Activated T-helper 2 cell treated with anti-CD3 and anti-CD28 coated beads, Interferon-gamma antibody, Interleukin-2, Interleukin-4, amounts not matched to agents 10 μg/mL and 5 μg/mL and 100 μg/mL, durations not matched to agents 14 hours and 24 hours and 36 hours (primary cell): ENCODE measurements at regions of chr17 and their contacts with region 1.

Region 1: DNA sequence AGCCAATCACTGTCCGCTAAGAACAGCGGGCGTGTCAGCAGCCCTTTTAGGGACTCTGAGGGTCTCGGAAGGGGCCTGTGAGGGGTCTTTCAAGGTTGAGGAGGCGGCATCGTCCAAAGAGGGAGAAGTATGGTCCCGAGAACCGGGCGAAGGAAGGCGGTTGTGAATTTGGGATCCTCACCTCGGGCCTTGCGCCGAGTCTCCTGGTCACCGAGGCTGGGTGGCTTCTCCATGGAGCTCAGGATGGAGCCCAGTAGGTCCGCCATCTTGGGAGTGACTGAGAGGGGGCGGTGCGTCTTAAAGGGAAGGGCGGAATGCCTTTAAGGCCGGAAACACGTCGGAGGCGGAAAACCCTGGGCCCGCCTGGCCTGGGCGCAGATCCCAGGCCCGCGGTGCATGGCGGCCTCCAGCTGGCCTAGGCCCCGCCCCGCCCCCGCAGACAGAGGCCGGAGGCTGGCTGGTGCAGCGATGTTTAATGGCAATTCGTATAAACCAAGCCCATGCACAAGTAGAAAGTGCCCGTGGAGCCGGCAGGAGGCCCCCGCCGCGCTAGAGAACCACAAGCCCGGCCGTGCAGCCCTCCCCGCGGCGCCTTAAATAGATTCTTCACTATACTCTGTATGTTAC is at the start of gene SPAG7:
- DNase-seq: peak; percentile 94
- H3K4me3 Mint-ChIP-seq: no peak within 1 kb of the TSS
- H3K27ac Mint-ChIP-seq: peak within 1 kb of the TSS; percentile 72
- H3K4me1 Mint-ChIP-seq: peaks cover 35% of the 10 kb centered on the region
- H3K27me3 Mint-ChIP-seq: no peaks in the 10 kb centered on the region
- total RNA-seq, gene SPAG7: 66.5 and 70.4 TPM in 2 replicates

Region 2: GRCh38 chr17:4908301-4908700 is 59.4 kb before region 1 on chr17:
- intact Hi-C with region 1: loop called (anchors 2 kb)
- DNase-seq: no peak
- H3K4me3 Mint-ChIP-seq: no peak overlapping the region
- H3K27ac Mint-ChIP-seq: no peak overlapping the region
- H3K4me1 Mint-ChIP-seq: peaks cover 4% of the 10 kb centered on the region
- H3K27me3 Mint-ChIP-seq: peaks cover 3% of the 10 kb centered on the region

Region 3: DNA sequence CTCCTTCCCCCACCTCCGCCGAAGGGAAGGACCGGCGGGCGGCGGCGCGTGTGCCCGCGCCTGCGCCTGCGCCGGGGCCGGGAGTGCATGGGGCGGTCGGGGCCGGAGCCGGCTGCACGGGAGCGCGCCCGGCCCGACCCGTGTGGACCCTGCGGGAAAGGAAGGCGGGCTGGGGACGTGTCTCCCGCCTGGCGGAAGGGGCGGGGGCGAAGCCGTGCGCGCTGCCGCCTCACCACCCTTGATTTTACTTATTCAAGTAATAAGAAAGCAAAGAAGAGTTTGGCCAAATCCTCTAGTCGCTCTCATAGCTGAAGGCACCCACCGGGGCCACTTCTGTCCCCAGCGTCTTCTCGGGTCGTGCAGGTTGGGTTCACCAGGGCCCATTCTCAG is 18.7 kb before region 1 on chr17:
- intact Hi-C with region 1: loop called (anchors 1 kb)
- DNase-seq: no peak
- H3K4me3 Mint-ChIP-seq: peak overlapping the region; percentile 100
- H3K27ac Mint-ChIP-seq: peak overlapping the region; percentile 100
- H3K4me1 Mint-ChIP-seq: peaks cover 37% of the 10 kb centered on the region
- H3K27me3 Mint-ChIP-seq: no peaks in the 10 kb centered on the region

Region 4: GRCh38 chr17:4986951-4987766 is 19.5 kb after region 1 on chr17 and contains the start of gene CAMTA2:
- intact Hi-C with region 1: loop called (anchors 2 kb)
- DNase-seq: peak; percentile 76
- H3K4me3 Mint-ChIP-seq: peak within 1 kb of the TSS; percentile 94
- H3K27ac Mint-ChIP-seq: peak within 1 kb of the TSS; percentile 86
- H3K4me1 Mint-ChIP-seq: peaks cover 37% of the 10 kb centered on the region
- H3K27me3 Mint-ChIP-seq: no peaks in the 10 kb centered on the region
- total RNA-seq, gene CAMTA2: 90.2 and 92.3 TPM in 2 replicates